ENCODE measurements at regions of chr9 and their contacts with region 1.

Region 1: GRCh38 chr9:82513242-82513751 is 524.7 kb downstream of the SPATA31D1 start:
- DNase-seq: no peak
- ATAC-seq: peak in 1 of 2 donors; percentile 16
- H3K4me3 ChIP-seq: no peak overlapping the region
- H3K27ac ChIP-seq: no peak overlapping the region
- H3K4me1 ChIP-seq: peaks cover 0 to 4% of the 10 kb centered on the region in 2 donors
- H3K27me3 ChIP-seq: no peaks in the 10 kb centered on the region
- CTCF ChIP-seq: no peak
- POLR2A ChIP-seq: no peak

Region 2: GRCh38 chr9:82410305-82410704 is 103.0 kb before region 1 on chr9:
- in situ Hi-C with region 1: loop called in 1 of 4 experiments (anchors 25 kb)
- intact Hi-C with region 1: no loop called
- DNase-seq: no peak
- ATAC-seq: no peak
- H3K4me3 ChIP-seq: no peak overlapping the region
- H3K27ac ChIP-seq: no peak overlapping the region
- H3K4me1 ChIP-seq: no peaks in the 10 kb centered on the region
- H3K27me3 ChIP-seq: no peaks in the 10 kb centered on the region
- CTCF ChIP-seq: no peak
- POLR2A ChIP-seq: no peak

Measured in gastrocnemius medialis (tissue), 4 donors.